Activated CD4-positive, alpha-beta memory T cell treated with anti-CD3 and anti-CD28 coated beads for 36 hours (primary cell): ENCODE measurements at regions of chr4 and their contacts with region 1.

Region 1: GRCh38 chr4:56799824-56800756 is 21.4 kb downstream of the SPINK2 start:
- DNase-seq: peak; percentile 92
- H3K4me3 Mint-ChIP-seq: peak overlapping the region; percentile 79
- H3K27ac Mint-ChIP-seq: no peak overlapping the region
- H3K4me1 Mint-ChIP-seq: peaks cover 13% of the 10 kb centered on the region
- H3K27me3 Mint-ChIP-seq: no peaks in the 10 kb centered on the region

Region 2: GRCh38 chr4:56289934-56290333 is 510.2 kb before region 1 on chr4:
- CTCF ChIA-PET with region 1: no interaction called
- POLR2A ChIA-PET with region 1: no interaction called
- intact Hi-C with region 1: no loop called
- DNase-seq: no peak
- H3K4me3 Mint-ChIP-seq: no peak overlapping the region
- H3K27ac Mint-ChIP-seq: no peak overlapping the region
- H3K4me1 Mint-ChIP-seq: peaks cover 9% of the 10 kb centered on the region
- H3K27me3 Mint-ChIP-seq: no peaks in the 10 kb centered on the region

Region 3: GRCh38 chr4:56544573-56545131 is 255.4 kb before region 1 on chr4:
- CTCF ChIA-PET with region 1: interaction called, 9 read pairs
- POLR2A ChIA-PET with region 1: no interaction called
- intact Hi-C with region 1: loop called (anchors 1 kb)
- DNase-seq: peak; percentile 90
- H3K4me3 Mint-ChIP-seq: peak overlapping the region; percentile 42
- H3K27ac Mint-ChIP-seq: no peak overlapping the region
- H3K4me1 Mint-ChIP-seq: peaks cover 13% of the 10 kb centered on the region
- H3K27me3 Mint-ChIP-seq: peaks cover 8% of the 10 kb centered on the region

Region 4: DNA sequence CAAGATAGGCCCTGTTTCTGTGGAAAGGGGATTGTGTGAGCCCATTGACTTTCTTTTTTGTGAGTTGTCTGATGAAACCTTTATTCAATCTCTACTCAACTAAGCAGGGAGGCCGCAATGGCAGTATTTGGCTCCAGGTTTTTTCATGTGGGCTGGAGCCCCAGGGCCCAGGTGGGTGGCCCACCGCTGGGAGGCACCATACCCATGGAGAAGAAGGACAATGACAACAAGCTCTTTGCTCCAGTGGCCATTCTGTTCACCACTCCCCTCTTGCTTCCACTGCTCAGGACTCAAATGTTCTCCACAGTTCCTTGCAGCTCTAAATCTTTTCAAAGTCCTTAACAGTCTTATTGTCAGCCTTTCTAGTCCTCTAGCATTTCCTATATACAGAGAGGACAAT is 173.1 kb before region 1 on chr4:
- CTCF ChIA-PET with region 1: interaction called, 14 read pairs
- POLR2A ChIA-PET with region 1: no interaction called
- intact Hi-C with region 1: no loop called
- DNase-seq: peak; percentile 38
- H3K4me3 Mint-ChIP-seq: no peak overlapping the region
- H3K27ac Mint-ChIP-seq: no peak overlapping the region
- H3K4me1 Mint-ChIP-seq: no peaks in the 10 kb centered on the region
- H3K27me3 Mint-ChIP-seq: peaks cover 2% of the 10 kb centered on the region

Region 5: DNA sequence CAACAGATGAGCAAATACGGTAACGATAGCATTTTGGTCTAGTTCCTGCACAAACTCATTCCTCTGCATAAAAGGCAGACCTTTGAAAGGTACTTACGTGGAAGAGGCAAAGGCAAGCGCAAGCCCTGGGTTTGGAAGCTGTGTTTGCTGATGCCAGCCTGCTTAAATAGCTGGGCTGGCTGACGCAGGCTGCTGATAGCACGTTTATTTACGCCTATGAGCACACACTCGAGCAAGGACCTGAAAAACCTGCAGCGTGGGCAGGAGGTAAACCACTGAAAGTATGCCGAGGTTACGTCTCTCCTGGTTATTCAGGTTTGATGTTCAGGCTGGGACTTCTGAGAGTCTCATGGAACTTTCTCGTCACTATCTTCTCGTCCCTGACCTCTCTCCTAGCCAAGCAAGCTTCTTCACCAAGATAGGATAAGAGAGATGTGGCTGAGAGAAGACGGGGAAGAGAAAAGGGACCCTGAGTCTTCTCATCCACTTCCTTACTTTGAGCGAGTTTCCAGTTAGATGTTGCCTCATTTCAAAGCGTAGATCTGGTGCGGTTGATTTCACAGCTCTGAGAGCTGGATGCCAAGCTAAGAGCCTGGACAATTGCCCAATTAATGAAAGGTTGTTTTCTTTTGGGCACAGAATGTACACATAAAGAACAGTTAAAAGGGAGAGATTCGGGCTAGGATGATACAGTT is 118.8 kb before region 1 on chr4 and contains the start of gene HOPX:
- CTCF ChIA-PET with region 1: interaction called, 6 read pairs
- POLR2A ChIA-PET with region 1: interaction called, 3 read pairs
- intact Hi-C with region 1: loop called (anchors 1 kb)
- DNase-seq: peak; percentile 88
- H3K4me3 Mint-ChIP-seq: peak within 1 kb of the TSS; percentile 34
- H3K27ac Mint-ChIP-seq: peak within 1 kb of the TSS; percentile 42
- H3K4me1 Mint-ChIP-seq: peaks cover 29% of the 10 kb centered on the region
- H3K27me3 Mint-ChIP-seq: peaks cover 41% of the 10 kb centered on the region
- total RNA-seq, gene HOPX: 124 to 126 TPM

Region 6: DNA sequence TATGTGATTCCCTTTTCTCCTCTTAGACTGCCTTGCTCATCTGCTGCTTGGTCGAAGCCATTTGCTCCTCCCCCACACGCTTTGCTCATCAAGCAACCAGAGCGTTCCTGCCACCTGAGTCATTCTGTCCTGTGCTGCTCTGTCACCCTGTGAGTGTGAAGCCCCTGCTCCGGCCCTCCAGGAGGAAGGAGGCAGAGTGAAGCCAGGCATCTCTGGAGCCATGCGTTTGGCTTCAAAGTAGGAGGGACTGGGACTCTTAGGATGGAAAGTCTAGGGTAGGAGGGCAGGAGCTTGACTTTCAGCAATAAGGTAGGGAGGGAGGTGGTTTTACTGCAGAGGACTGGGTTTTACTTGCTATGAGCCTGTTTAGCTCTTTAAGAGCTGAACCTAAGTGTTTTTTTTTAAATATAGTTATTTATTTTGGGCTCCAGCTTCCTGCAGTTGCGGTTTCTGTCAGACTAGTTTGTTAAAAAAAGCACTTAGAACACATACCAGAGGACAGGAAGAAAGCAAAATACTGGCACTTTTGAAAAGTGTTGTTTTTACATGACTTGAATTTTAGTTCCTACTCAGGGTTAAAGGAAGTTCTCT is 42.2 kb before region 1 on chr4:
- CTCF ChIA-PET with region 1: interaction called, 4 read pairs
- POLR2A ChIA-PET with region 1: no interaction called
- intact Hi-C with region 1: loop called (anchors 1 kb)
- DNase-seq: peak; percentile 90
- H3K4me3 Mint-ChIP-seq: peak overlapping the region; percentile 40
- H3K27ac Mint-ChIP-seq: peak overlapping the region; percentile 87
- H3K4me1 Mint-ChIP-seq: peaks cover 31% of the 10 kb centered on the region
- H3K27me3 Mint-ChIP-seq: peaks cover 3% of the 10 kb centered on the region